ENCODE measurements at regions of chr1 and their contacts with region 1.

Region 1: DNA sequence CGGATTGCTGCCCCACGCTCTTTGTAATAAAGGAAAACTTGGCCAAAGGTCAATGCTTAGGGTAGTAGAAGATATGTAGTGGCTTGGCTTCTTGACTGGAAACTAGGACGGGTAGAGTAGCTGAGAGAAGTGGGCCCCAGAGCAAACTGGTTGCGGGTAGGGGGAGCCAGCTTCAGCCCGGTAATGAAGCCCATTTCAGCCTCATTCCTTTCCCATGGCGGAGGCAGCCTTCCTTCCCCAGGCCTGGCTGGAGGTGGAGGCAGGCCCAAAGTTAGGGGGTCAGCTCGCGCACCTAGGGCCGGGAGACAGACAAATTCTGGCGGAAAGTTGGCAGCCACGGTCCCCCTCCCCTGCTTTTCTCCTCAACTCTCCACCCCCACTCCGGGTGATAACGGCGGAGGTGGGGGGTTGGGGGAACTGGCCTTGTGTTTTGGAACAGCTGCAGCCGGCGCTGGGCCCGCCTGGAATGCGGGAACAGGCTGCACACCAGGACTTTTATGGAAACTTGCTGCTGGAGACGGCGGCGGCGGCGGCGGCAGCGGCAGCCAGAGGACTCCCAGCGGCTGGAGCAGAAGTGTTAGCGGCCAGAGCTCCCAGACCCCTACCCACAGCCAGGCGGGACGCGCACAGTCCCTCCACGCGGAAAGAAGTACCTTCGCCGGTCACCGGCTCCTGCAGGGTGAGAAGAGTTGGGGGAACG is at the start of gene NEXN:
- DNase-seq: peak; percentile 21
- H3K4me3 ChIP-seq: peak within 1 kb of the TSS; percentile 77
- H3K27me3 ChIP-seq: no peaks in the 10 kb centered on the region
- CTCF ChIP-seq: peak; percentile 36
- polyA plus RNA-seq, gene NEXN: 7.8 and 16.9 TPM in 2 replicates

Region 2: GRCh38 chr1:77926561-77927357 is 38.5 kb after region 1 on chr1:
- CTCF ChIA-PET with region 1: no interaction called
- POLR2A ChIA-PET with region 1: interaction called, 13 read pairs
- DNase-seq: no peak
- H3K4me3 ChIP-seq: no peak overlapping the region
- H3K27me3 ChIP-seq: no peaks in the 10 kb centered on the region
- CTCF ChIP-seq: no peak

Region 3: DNA sequence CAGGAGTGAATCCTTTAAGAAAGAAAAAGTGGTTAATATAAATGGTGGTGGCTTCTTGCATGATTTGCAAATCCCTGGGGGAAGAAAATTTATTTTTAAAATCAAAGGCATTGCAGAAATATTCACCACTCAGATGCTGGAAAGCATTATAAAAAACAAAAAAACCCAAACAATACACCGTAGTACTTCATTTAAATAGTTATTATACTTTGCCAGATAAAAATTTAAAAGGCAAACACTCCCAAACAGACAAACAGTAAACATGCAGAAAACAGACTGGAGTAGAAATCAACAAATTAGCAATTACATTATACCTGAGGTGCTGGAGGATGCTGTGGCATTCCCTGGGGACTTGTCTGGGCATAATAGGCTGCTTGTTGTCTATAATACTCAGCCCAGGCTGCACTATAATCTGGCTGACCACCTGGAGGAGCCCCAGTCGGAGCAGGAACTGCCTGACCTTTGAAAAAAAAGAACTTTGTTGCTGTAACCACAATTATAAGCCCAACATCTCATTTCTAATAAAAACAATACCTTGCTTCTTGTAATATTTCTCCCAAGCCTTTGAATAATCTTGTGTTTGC is 60.7 kb after region 1 on chr1:
- CTCF ChIA-PET with region 1: no interaction called
- POLR2A ChIA-PET with region 1: no interaction called
- DNase-seq: no peak
- H3K4me3 ChIP-seq: no peak overlapping the region
- H3K27me3 ChIP-seq: no peaks in the 10 kb centered on the region
- CTCF ChIP-seq: peak; percentile 45

Measured in BJ (cell line).